OCI-LY7 (cell line): ENCODE measurements at regions of chr2 and their contacts with region 1.

Region 1: GRCh38 chr2:100242891-100243619 is 79.2 kb downstream of the LONRF2 start:
- DNase-seq: peak; percentile 83
- H3K4me3 ChIP-seq: no peak overlapping the region
- H3K27ac ChIP-seq: no peak overlapping the region
- H3K4me1 ChIP-seq: peaks cover 56% of the 10 kb centered on the region
- CTCF ChIP-seq: peak; percentile 97

Region 2: DNA sequence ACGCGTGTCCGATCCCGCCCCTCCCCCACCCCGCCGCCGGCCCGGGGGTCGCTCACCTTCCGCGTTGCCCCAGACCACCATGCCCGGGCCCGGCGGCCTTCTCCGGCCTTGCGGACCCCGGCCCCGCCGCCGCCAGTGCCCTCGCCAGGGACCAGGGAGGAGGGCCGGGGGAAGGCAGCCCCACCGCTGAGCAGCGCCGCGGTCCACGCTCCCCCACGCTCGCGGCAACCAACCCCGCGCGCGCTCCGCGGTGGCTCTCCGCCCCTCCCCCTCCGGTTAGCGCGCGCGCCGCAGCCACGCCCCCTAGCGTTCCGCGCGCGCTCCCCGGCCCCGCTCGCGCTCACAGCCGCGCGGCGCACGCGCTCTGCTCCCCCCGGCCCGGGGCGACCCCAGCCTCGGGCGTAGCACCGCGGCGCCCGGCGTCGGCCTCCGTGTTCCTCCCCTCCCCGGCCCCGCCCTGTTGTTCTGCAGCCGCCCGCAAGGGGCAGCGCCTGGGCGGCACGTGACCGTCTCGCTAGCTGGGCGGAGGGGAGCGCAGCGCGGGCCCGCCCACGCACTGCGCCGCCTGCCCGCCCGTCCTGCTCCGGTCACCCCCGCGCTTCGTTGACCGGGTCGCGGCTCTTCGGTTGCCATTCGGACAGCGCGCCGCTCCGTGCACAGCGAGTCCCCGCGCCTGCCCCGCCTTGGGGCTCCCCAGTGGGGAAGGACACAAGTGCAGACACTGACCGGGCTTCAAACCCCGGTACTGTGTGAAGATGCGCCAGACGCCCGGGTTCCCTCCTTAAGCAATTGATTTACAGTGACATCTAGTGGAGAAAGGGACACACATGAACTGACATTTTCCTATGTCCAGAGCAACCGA is 753.1 kb before region 1 on chr2 and contains the start of gene REV1:
- CTCF ChIA-PET with region 1: no interaction called
- POLR2A ChIA-PET with region 1: no interaction called
- intact Hi-C with region 1: loop called (anchors 5 kb)
- DNase-seq: peak; percentile 96
- H3K4me3 ChIP-seq: peak within 1 kb of the TSS; percentile 78
- H3K27ac ChIP-seq: peak within 1 kb of the TSS; percentile 49
- H3K4me1 ChIP-seq: peaks cover 28% of the 10 kb centered on the region
- CTCF ChIP-seq: peak; percentile 85
- total RNA-seq, gene REV1: 59.4 and 68.1 TPM in 2 replicates

Region 3: GRCh38 chr2:99636144-99637034 is 606.7 kb before region 1 on chr2:
- CTCF ChIA-PET with region 1: no interaction called
- POLR2A ChIA-PET with region 1: no interaction called
- intact Hi-C with region 1: loop called (anchors 1 kb)
- DNase-seq: peak; percentile 41
- H3K4me3 ChIP-seq: peak overlapping the region; percentile 53
- H3K27ac ChIP-seq: peak overlapping the region; percentile 99
- H3K4me1 ChIP-seq: peaks cover 72% of the 10 kb centered on the region
- CTCF ChIP-seq: no peak

Region 4: DNA sequence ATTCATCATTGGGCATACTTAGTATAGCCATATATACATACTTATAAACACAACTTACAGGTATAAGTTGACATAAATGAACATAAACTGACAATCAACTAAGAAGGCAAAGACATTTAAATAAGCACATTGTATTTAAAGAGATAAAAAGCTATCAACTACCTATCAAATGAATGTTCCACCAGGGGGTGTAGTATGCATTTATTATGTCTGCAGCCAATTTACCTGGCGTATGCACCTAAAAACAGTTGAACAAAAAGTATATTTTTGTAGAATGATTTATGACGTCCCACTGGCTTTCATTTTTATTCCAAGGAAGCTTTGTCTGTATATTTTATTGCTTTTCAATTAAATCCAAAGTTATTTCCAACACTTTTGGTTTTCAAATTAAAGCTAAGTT is 424.2 kb before region 1 on chr2:
- CTCF ChIA-PET with region 1: interaction called, 3 read pairs
- POLR2A ChIA-PET with region 1: no interaction called
- intact Hi-C with region 1: loop called (anchors 5 kb)
- DNase-seq: peak; percentile 62
- H3K4me3 ChIP-seq: no peak overlapping the region
- H3K27ac ChIP-seq: no peak overlapping the region
- H3K4me1 ChIP-seq: no peaks in the 10 kb centered on the region
- CTCF ChIP-seq: peak; percentile 80

Region 5: GRCh38 chr2:99864561-99865553 is 378.2 kb before region 1 on chr2:
- CTCF ChIA-PET with region 1: no interaction called
- POLR2A ChIA-PET with region 1: no interaction called
- intact Hi-C with region 1: loop called (anchors 2 kb)
- DNase-seq: no peak
- H3K4me3 ChIP-seq: no peak overlapping the region
- H3K27ac ChIP-seq: no peak overlapping the region
- H3K4me1 ChIP-seq: peaks cover 68% of the 10 kb centered on the region
- CTCF ChIP-seq: no peak

Region 6: DNA sequence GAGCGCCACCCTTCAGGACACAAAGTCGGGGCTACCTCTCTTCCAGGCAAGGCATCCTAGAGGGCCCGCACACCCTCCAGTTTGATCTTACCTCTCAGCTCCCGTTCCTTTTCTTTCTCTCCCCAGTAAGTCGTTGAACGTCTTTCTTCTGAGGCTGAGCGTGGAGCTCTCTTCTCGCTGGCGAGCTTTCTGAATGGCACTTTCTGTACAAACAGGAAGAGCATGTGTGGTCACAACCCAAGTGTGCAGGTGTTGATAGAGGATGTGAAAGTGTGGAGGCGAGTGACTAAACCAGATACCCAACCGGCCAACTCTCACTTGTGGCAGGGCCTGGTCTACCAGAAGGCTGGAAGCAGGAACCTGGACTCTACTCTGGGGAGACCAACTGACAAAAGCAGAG is 100.7 kb before region 1 on chr2 and contains the start of gene AFF3:
- CTCF ChIA-PET with region 1: interaction called, 5 read pairs
- POLR2A ChIA-PET with region 1: interaction called, 29 read pairs
- intact Hi-C with region 1: loop called (anchors 1 kb)
- DNase-seq: peak; percentile 99
- H3K4me3 ChIP-seq: peak within 1 kb of the TSS; percentile 91
- H3K27ac ChIP-seq: peak within 1 kb of the TSS; percentile 98
- H3K4me1 ChIP-seq: peaks cover 51% of the 10 kb centered on the region
- CTCF ChIP-seq: peak; percentile 17; the same call in 1 of the 2 replicates
- total RNA-seq, gene AFF3: 133 and 162 TPM in 2 replicates